Gastrocnemius medialis (tissue), 4 donors: ENCODE measurements at regions of chrX and their contacts with region 1.

Region 1: DNA sequence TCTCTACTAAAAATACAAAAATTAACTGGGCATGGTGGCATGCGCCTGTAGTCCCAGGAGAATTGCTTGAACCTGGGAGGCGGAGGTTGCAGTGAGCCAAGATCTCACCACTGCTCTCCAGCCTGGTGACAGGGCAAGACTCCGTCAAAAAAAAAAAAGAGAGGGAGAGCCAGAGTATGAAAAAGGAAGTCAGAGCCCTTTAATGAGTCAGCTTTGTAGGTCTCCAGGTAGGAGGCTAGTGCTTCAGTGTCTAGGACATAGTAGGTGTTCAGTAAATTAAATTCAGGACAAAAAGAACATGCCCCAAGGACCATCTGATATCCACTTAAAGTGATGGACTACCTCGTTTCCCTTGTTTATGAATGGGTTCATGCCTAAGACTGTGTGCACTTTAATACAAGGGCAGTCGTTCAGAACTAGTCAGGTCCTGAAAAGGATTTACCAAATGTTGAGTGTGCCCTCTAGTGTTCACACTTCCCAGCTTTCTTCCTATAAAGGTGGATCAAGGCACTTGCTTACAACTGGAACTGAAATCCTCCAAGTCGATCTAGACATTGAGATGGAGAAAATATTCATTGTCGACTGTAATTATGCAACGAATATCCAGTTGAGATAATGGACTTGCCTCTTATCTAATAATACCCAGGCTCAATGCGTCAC is 29.0 kb downstream of the F9 start:
- DNase-seq: peak in 1 of 2 donors; percentile 3
- ATAC-seq: peak; percentile 69 to 80
- H3K4me3 ChIP-seq: no peak overlapping the region
- H3K27ac ChIP-seq: no peak overlapping the region
- H3K4me1 ChIP-seq: no peaks in the 10 kb centered on the region
- H3K27me3 ChIP-seq: no peaks in the 10 kb centered on the region
- CTCF ChIP-seq: peak in 3 of 5 experiments; percentile 47 to 57 (median 48)
- POLR2A ChIP-seq: no peak

Region 2: DNA sequence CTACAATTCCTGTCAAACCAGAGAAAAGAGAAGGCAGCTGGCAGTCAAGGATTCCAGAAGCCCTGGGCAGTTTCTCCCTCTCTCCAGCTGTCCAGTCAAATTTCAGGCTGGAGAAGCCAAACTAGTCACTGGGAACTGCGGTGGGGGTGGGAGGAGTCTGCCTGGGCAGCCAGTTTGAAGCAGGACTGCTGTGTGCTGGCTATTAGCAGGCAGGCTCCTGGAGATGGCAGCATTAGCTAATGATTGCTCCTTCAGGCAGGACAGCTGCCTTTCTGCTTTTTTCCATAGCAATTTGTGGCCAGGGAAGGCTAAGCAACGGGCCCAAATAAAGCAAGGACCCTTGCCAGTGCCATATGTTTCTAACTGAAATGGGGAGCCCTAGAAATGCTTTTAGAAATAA is 803.3 kb before region 1 on chrX:
- in situ Hi-C with region 1: loop called in 2 of 4 experiments (anchors 25 kb)
- intact Hi-C with region 1: no loop called
- DNase-seq: peak; percentile 4 to 32
- ATAC-seq: peak; percentile 76 to 79
- H3K4me3 ChIP-seq: no peak overlapping the region
- H3K27ac ChIP-seq: no peak overlapping the region
- H3K4me1 ChIP-seq: peaks cover 0 to 11% of the 10 kb centered on the region in 2 donors
- H3K27me3 ChIP-seq: no peaks in the 10 kb centered on the region
- CTCF ChIP-seq: peak in 1 of 5 experiments; percentile 30
- POLR2A ChIP-seq: no peak

Region 3: GRCh38 chrX:138775517-138775916 is 784.0 kb before region 1 on chrX:
- in situ Hi-C with region 1: loop called (anchors 10 to 25 kb)
- intact Hi-C with region 1: no loop called
- DNase-seq: no peak
- ATAC-seq: peak in 1 of 2 donors; percentile 64
- H3K4me3 ChIP-seq: no peak overlapping the region
- H3K27ac ChIP-seq: no peak overlapping the region
- H3K4me1 ChIP-seq: peaks cover 0 to 4% of the 10 kb centered on the region in 2 donors
- H3K27me3 ChIP-seq: no peaks in the 10 kb centered on the region
- CTCF ChIP-seq: peak in 4 of 5 experiments; percentile 24 to 52 (median 40)
- POLR2A ChIP-seq: no peak

Region 4: GRCh38 chrX:139126493-139126892 is 433.0 kb before region 1 on chrX:
- in situ Hi-C with region 1: loop called in 1 of 4 experiments (anchors 25 kb)
- intact Hi-C with region 1: loop called (anchors 5 kb)
- DNase-seq: peak; percentile 11 to 62
- ATAC-seq: peak; percentile 94 to 98
- H3K4me3 ChIP-seq: no peak overlapping the region
- H3K27ac ChIP-seq: peak overlapping the region in 2 of 4 donors; percentile 42 to 43
- H3K4me1 ChIP-seq: no peaks in the 10 kb centered on the region
- H3K27me3 ChIP-seq: no peaks in the 10 kb centered on the region
- CTCF ChIP-seq: peak; percentile 53 to 79 (median 60)
- POLR2A ChIP-seq: no peak

Region 5: DNA sequence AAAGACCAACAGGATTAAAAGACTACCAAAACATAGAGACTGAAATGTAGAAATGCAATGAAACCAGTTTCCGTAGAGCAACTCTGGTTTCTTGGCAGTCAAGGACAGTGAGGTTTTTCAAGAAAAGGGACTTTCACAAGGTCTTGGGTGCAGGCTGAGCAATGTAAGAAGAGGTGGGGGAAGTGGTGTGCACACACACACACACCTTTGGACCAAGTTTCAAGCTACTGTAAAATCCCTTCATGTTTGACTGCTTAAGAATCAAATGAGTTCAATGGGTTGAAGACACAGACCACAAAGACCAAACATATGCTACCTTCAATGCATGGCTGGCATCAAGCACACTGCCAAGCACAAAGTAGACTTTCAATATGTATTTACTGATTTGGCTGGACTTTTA is 166.2 kb after region 1 on chrX:
- in situ Hi-C with region 1: no loop called
- intact Hi-C with region 1: no loop called
- DNase-seq: no peak
- ATAC-seq: no peak
- H3K4me3 ChIP-seq: no peak overlapping the region
- H3K27ac ChIP-seq: no peak overlapping the region
- H3K4me1 ChIP-seq: no peaks in the 10 kb centered on the region
- H3K27me3 ChIP-seq: no peaks in the 10 kb centered on the region
- CTCF ChIP-seq: no peak
- POLR2A ChIP-seq: no peak